WTC11 (cell line): ENCODE measurements at regions of chr10 and their contacts with region 1.

Region 1: DNA sequence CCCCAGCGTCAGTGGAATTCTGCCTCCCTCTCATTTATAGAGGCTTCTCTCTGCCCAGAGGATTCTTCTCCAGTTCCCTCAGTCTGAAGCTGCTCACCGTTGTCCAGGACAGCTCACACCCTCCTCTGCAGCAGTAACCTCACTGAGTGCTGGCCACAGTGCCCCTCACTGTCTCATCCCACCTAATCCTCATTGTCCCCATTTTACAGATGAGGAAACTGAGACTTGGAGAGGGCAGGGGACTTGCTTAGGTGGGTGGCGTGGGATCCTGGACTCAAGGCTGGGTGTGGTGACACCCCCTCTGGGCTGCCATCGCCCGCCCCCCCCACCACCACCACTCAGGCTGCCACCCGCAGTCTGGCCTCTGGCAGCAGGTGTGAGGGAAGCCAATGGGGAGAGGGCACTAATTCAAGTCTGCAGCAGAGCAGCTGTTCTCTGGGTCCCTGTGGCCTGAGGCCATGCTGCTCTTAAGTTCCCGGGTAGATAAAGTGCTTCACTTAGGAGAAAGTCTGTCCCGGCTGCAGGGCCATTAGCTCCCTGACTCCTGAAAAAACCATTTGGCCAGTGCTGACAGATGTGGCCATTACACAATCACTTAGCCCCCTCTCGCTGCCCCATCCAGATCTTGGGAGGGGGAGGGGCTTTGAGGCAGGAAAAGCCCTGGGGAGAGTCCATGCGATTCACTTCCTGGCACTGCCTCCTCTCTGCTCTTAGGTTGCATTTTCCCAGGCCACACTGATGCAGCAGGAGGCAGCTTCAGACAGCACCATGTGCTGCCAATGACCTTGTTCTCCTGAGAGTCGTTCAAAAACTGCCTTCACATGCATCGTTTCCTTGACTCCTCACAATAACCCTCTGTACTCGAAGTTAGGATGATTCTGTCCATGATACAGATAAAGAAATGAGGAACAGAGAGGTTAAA is 36.3 kb downstream of the DRGX start:
- DNase-seq: peak; percentile 39
- ATAC-seq: peak; percentile 89
- H3K4me3 Mint-ChIP-seq: no peak overlapping the region
- H3K27ac Mint-ChIP-seq: peak overlapping the region; percentile 41; the same call in 1 of the 2 replicates
- H3K4me1 Mint-ChIP-seq: peaks cover 21% of the 10 kb centered on the region
- H3K27me3 Mint-ChIP-seq: peaks cover 2% of the 10 kb centered on the region; the same call in 1 of the 2 replicates
- CTCF ChIP-seq: no peak

Region 2: DNA sequence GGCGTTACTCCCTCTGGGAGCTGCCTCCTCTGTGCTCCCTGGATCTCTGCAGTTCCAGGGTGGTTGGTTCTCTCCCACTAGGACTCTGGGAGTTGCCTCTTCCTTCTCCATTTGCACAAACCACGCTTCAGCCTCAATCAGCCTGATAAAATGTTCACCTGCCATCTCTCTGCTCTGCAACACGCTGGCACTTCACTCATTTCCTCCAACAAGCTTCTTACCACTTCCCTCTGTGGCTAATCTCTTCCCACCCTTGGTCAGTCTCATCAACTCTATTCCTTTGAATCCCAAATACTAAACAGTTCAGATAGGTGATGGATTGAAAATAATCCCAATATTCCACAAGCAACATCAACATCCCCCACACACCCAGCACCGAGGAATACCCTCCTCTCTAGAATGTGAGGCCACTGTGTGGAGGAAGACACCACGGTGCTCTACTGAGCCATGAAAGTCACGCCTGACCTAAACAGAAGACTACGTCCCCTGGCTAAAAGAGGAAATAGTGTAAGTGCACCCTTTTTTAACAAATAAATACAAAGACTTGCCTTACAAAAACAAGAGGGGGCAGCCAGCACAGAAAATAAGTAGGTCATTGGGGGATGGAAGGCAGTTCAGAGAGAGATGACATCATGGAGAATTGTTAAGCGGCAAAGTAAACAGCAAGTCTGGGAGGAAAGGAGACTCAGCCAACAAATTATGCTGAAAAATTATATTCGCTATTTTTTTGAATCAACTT is 223.9 kb before region 1 on chr10:
- CTCF ChIA-PET with region 1: no interaction called
- POLR2A ChIA-PET with region 1: no interaction called
- DNase-seq: no peak
- ATAC-seq: no peak
- H3K4me3 Mint-ChIP-seq: no peak overlapping the region
- H3K27ac Mint-ChIP-seq: no peak overlapping the region
- H3K4me1 Mint-ChIP-seq: peaks cover 11% of the 10 kb centered on the region
- H3K27me3 Mint-ChIP-seq: no peaks in the 10 kb centered on the region
- CTCF ChIP-seq: no peak

Region 3: DNA sequence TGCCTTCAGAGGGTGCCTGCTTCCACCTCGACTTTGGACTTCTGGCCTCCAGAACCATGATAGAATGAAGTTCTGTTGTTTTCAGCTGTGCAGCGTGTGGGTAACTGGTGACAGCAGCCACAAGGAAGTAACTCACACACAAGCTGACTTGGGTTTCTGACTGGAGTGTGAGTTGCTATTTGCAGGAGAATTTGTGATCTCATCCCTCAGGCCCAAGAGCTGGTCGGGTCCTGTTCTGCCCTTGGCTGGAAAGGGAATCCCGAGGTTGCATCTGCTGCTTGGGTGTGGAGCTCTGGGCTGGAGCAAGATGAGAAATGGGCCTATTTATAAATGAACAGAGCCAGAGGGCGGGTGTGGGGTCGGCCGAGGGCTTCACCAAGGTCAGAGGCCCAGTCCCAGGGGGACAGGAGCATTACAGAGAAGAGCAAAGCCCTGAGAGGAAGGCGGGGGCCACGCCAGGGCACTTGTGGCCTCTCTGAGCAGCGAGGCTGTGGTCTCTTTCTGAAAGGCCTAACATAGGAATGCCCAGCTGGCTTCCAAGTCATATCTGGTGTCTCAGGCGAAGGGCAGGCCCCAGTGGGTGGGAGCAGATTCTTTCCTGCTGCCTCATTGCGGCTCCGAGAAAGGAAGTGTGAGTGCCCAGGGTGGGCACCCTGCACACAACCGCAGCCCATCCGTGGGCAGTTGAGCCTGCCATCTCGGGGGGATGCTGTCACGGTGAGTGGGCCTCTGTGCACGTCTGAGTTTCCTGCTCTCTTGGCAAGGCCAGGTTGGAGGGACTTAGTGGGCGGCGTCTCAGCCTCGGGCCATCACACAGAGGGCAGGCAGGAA is 87.1 kb before region 1 on chr10:
- CTCF ChIA-PET with region 1: no interaction called
- POLR2A ChIA-PET with region 1: no interaction called
- DNase-seq: no peak
- ATAC-seq: no peak
- H3K4me3 Mint-ChIP-seq: no peak overlapping the region
- H3K27ac Mint-ChIP-seq: no peak overlapping the region
- H3K4me1 Mint-ChIP-seq: no peaks in the 10 kb centered on the region
- H3K27me3 Mint-ChIP-seq: no peaks in the 10 kb centered on the region; the same call in 1 of the 2 replicates
- CTCF ChIP-seq: no peak

Region 4: GRCh38 chr10:49335364-49335972 is 24.1 kb before region 1 on chr10:
- CTCF ChIA-PET with region 1: no interaction called
- POLR2A ChIA-PET with region 1: interaction called, 11 read pairs
- DNase-seq: no peak
- ATAC-seq: no peak
- H3K4me3 Mint-ChIP-seq: no peak overlapping the region
- H3K27ac Mint-ChIP-seq: no peak overlapping the region
- H3K4me1 Mint-ChIP-seq: no peaks in the 10 kb centered on the region; the same call in 1 of the 2 replicates
- H3K27me3 Mint-ChIP-seq: no peaks in the 10 kb centered on the region; the same call in 1 of the 2 replicates
- CTCF ChIP-seq: no peak

Region 5: DNA sequence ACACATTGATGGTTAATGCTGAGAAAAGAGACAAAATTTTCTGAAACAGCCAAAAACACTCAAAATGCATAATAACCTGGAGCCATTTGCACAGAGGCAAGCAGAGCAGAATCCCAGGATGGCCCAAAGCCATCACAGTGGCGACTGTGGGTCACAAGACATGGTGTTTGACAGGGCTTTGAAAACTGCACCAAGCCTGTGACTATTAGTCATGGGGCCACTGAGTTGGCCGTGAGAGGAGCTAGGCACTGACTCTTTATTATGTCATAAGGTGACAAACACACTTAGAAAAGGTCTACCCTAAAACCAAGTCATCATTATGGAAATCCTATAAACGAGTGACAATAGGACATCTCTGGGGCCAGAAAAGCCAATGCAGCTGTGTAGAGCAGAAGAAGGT is 12.4 kb after region 1 on chr10:
- CTCF ChIA-PET with region 1: no interaction called
- POLR2A ChIA-PET with region 1: no interaction called
- DNase-seq: no peak
- ATAC-seq: no peak
- H3K4me3 Mint-ChIP-seq: no peak overlapping the region
- H3K27ac Mint-ChIP-seq: no peak overlapping the region
- H3K4me1 Mint-ChIP-seq: peaks cover 8% of the 10 kb centered on the region
- H3K27me3 Mint-ChIP-seq: no peaks in the 10 kb centered on the region
- CTCF ChIP-seq: no peak